Activated naive CD4-positive, alpha-beta T cell treated with anti-CD3 and anti-CD28 coated beads for 36 hours (primary cell): ENCODE measurements at regions of chr19 and their contacts with region 1.

Region 1: DNA sequence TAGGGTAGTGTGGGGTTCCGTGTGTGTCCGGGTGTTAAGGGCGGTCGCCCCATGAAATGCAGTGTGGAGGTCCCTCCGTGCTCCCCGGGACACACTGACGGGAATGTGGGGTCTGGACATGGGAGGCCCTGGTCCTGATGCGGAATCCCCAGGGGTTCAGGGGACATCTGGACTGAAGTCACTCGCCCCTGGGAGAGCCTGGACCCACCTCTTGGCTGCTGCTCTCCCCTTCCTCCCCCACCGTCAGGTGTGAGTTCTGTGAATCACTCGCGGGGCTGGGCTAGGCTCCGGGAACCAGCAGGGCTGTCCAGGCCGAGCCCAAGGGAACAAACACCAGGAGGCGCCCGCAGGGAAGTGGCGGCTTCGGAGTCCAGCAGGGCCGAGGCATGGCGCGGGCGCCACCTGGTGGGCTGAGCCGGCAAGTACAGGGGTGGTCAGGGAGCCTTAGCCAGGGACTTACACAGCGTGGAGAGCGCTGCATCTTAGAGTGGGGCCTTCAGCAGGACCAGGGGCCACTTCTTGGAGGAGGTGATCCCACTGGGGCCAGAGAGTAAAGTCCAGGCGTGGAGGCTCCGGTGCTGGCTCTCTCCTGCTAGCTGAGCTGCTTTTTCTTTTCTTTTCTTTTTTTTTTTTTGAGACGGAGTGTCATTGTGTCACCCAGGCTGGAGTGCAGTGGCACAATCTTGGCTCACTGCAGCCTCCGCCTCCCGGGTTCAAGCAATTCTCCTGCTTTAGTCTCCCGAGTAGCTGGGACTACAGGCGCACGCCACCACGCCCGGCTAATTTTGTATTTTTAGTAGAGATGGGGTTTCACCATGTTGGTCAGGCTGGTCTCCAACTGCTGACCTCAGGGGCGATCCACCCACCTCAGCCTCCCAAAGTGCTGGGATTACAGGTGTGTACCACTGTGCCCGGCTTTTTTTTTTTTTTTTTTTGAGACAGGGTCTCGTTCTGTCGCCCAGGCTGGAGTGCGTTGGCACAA is 20.1 kb downstream of the WTIP start:
- DNase-seq: peak; percentile 94
- H3K4me3 Mint-ChIP-seq: no peak overlapping the region
- H3K27ac Mint-ChIP-seq: no peak overlapping the region
- H3K4me1 Mint-ChIP-seq: peaks cover 9% of the 10 kb centered on the region
- H3K27me3 Mint-ChIP-seq: peaks cover 20% of the 10 kb centered on the region

Region 2: DNA sequence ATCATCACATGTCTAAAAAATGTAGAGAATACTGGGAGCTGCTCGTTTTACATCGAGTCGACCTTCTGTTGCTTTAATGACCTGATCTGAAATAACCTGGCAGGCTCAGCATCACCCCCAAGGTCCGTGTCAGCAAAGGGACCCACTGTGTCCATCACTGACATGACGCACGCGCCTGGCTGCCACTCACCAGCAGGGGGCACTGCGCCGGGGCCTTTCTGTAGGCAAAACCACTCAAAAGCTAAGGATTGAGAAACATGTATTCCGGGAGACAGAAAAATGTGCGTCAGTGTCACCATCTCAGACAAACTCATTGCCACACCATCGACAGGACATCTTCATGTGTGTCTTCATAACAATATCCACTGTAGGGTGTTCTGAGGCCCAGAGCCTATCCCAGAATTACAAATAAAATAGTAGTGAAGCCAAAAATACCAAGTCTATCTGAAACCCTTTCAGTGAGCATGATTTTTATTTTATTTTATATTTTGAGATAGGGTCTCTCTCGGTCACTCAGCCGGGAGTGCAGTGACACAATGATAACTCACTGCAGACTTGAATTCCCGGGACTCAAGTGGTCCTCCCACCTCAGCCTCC is 459.6 kb before region 1 on chr19:
- CTCF ChIA-PET with region 1: interaction called, 4 read pairs
- intact Hi-C with region 1: loop called (anchors 2 kb)
- DNase-seq: peak; percentile 90
- H3K4me3 Mint-ChIP-seq: no peak overlapping the region
- H3K27ac Mint-ChIP-seq: no peak overlapping the region
- H3K4me1 Mint-ChIP-seq: peaks cover 2% of the 10 kb centered on the region
- H3K27me3 Mint-ChIP-seq: peaks cover 5% of the 10 kb centered on the region

Region 3: DNA sequence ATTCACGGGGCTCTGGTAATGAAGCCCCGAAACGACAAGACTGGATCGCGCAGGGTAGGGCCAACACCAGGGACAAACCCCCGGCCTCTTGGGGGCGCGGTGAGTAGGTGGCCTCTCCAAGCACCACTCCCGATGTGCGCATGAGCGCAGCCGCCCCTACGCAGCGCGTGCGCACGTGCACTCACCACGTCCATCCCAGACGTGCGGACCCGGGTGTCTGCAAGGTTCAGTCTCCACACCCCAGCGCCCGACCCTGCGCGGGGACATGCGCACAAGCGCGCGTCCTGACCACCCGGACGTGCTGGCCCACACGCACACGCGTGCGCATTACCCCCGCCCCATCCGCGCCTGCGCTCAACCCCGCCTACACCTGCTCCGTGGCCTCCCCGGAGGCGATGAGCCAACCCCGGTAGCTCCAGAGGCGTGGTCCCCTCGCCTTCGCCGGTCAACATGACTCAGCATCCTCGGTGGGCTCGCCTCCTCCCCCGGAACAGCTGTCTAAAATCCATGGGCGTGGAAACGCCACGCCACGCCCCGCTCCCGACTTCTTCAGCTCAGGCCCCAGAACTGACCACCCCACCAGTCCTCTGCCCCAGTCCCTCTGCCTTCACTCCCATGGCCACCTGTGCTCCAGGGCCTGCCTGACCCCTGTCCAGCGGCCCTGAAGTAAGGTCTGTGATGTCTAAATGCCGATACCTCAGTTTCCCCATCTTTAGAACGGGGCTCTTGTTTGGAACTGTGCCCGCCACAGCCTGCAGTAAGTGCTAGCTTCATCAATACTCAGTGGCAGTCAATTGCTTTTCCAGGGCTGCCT is 142.3 kb before region 1 on chr19:
- CTCF ChIA-PET with region 1: interaction called, 3 read pairs
- intact Hi-C with region 1: loop called (anchors 2 kb)
- DNase-seq: peak; percentile 96
- H3K4me3 Mint-ChIP-seq: peak overlapping the region; percentile 80
- H3K27ac Mint-ChIP-seq: peak overlapping the region; percentile 93
- H3K4me1 Mint-ChIP-seq: peaks cover 35% of the 10 kb centered on the region
- H3K27me3 Mint-ChIP-seq: no peaks in the 10 kb centered on the region

Region 4: GRCh38 chr19:34404109-34404897 is 97.3 kb before region 1 on chr19 and contains the start of gene PDCD2L:
- CTCF ChIA-PET with region 1: no interaction called
- intact Hi-C with region 1: loop called (anchors 1 kb)
- DNase-seq: peak; percentile 96
- H3K4me3 Mint-ChIP-seq: peak within 1 kb of the TSS; percentile 87
- H3K27ac Mint-ChIP-seq: peak within 1 kb of the TSS; percentile 71
- H3K4me1 Mint-ChIP-seq: peaks cover 24% of the 10 kb centered on the region
- H3K27me3 Mint-ChIP-seq: no peaks in the 10 kb centered on the region
- total RNA-seq, gene PDCD2L: 24.8 to 34.1 TPM

Region 5: DNA sequence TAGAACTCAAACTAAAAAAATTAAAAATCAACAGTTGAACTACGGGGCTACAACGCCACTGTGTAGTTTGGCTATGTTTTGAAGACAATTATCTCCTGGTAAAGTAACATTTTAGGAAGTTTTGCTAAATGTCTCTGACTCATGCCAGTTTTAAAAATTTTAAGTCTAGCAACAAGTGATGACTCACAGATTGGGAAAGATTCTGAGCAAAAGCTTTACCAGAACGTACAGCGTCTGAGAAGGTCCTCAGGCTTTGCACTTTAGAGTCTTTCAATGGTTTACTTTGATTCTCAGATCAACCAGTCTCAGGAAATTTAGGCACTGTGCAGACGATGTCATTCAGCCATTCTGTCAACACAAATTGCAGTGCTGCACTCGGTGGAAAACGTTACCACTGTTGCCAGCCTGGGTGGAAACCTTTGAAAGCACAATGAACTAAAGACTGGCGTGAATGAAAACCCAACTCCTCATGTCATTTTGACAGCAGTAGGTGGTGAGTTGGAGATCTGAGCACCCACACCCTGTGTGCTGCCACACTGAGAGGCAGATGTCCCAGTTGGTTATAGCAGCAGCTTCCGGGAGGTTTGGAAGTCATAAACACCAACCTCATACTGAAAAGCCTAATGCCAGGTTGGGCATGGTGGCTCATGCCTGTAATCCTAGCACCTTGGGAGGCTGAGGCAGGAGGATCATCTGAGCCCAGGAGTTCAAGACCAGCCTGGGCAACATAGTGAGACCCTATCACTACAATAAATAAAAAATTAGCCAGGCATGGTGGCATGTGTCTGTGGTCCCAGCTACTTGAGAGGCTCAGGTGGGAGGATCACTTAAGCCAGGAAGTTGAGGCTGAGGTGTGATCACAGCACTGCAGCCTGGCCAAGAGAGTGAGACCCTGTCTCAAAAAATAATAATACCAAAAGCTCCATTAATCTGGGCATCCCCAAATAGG is 26.3 kb before region 1 on chr19:
- CTCF ChIA-PET with region 1: interaction called, 4 read pairs
- intact Hi-C with region 1: loop called (anchors 1 kb)
- DNase-seq: peak; percentile 70
- H3K4me3 Mint-ChIP-seq: no peak overlapping the region
- H3K27ac Mint-ChIP-seq: peak overlapping the region; percentile 84
- H3K4me1 Mint-ChIP-seq: peaks cover 19% of the 10 kb centered on the region
- H3K27me3 Mint-ChIP-seq: peaks cover 11% of the 10 kb centered on the region

Region 6: DNA sequence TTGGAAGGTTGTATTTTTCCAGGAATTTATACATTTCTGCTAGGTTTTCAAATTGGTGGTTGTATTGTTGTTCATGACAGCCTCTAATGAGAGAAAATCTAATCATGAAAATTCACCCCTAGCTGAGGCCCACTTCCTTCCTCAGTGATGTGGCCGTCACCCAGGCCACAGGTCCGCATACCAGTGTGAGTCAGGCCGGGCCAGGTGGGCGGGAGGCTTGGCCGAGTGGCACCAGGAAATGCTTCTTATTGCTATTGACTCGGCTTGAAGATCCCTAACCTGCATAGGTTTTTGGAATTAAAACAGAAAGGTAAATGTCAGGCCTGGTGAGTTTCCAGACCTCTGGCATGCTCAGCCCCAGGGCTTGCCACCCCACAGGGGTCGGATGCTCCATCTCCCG is 86.6 kb after region 1 on chr19:
- CTCF ChIA-PET with region 1: no interaction called
- intact Hi-C with region 1: no loop called
- DNase-seq: no peak
- H3K4me3 Mint-ChIP-seq: no peak overlapping the region
- H3K27ac Mint-ChIP-seq: no peak overlapping the region
- H3K4me1 Mint-ChIP-seq: no peaks in the 10 kb centered on the region
- H3K27me3 Mint-ChIP-seq: no peaks in the 10 kb centered on the region

Region 7: DNA sequence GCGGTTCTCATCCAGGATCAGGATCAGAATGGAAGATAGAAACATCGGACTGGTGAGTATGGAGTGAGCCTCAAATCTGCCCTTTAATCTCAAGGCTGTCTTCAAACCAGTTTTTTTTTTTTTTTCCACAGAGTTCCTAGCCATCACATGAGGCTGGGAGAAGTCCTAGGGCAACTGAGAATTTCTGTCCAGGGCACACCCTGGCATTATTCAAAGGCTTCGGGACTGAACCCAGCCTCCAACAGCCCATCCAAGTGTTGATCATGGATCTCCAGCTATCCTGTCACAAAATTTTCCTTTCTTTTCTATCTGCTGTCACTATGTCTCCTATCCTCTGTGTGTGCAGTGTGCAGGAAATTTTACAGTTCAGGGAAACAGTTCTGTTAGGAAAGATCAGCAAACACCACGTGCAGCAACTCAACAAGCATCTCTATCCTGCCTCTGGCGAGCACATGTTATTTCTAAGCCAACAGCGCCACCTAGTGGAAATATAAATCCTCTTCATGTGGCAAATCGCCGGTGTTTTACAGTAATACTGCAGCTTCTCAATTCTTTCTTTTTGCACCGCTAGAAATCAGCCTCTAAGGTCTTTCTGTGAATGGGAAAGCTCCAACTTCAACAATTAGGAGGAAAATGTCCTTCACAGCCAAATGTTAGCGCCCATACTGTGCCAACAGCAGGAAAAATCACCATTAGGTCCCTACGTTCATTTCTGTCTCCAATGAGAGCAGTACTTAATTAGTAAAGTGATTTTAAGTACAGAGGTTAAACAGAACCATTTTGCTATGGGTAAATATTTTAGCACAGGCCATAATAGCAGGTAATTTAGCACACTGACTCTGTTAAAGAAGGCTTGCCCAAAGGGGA is 211.0 kb after region 1 on chr19:
- CTCF ChIA-PET with region 1: interaction called, 3 read pairs
- intact Hi-C with region 1: loop called (anchors 1 kb)
- DNase-seq: peak; percentile 74
- H3K4me3 Mint-ChIP-seq: no peak overlapping the region
- H3K27ac Mint-ChIP-seq: no peak overlapping the region
- H3K4me1 Mint-ChIP-seq: no peaks in the 10 kb centered on the region
- H3K27me3 Mint-ChIP-seq: peaks cover 11% of the 10 kb centered on the region